ENCODE measurements at regions of chr19 and their contacts with region 1.

Region 1: DNA sequence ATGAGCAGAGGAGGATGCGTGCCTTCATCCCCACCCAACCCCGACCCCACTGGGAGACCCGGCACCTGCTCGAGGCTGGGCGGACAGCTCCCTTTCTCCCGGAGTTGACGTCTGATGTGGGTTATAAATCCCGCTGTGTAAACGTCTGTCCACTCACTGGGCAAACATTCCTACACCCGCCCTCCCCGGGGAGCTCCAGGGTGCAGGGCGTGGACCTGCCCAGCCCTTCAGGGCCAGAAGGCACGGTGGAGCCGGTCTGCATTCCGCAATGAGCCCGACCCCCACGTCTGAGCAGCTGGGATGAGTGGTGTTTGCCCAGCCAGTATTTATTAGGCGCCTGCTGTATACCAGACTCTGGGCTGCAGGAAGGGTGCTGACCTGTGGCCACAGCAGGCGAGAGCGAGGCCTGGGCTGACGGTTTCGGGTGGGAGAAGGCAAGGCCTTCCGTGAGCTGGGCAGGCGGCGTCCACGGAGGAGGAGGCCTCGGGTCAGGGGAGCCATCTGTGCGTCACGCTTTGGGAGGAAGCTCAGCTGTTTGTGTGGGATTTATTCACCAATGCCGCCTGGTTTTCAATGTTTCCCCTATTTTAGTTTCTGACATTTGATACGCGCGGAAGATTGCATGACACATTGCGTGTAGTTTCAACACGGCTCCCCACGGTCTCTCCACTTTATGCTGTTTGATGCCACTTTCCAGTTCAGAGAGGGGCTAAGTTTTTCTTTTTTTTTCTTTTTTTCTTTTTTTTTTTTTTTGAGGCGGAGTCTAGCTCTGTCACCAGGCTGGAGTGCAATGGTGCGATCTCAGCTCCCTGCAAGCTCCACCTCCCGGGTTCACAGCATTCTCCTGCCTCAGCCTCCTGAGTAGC is 2.0 kb downstream of the MISP start:
- DNase-seq: peak; percentile 95 to 99
- ATAC-seq: peak; percentile 81 to 85
- H3K4me3 ChIP-seq: peak overlapping the region; percentile 89
- H3K27ac ChIP-seq: peak overlapping the region; percentile 99 to 100
- H3K4me1 ChIP-seq: peaks cover 33% of the 10 kb centered on the region
- CTCF ChIP-seq: no peak
- EP300 ChIP-seq: peak; percentile 94 to 97; a peak in 4 of 5 replicates
- POLR2A ChIP-seq: peak; percentile 27; the same call in 1 of the 2 replicates
- RAD21 ChIP-seq: no peak

Region 2: DNA sequence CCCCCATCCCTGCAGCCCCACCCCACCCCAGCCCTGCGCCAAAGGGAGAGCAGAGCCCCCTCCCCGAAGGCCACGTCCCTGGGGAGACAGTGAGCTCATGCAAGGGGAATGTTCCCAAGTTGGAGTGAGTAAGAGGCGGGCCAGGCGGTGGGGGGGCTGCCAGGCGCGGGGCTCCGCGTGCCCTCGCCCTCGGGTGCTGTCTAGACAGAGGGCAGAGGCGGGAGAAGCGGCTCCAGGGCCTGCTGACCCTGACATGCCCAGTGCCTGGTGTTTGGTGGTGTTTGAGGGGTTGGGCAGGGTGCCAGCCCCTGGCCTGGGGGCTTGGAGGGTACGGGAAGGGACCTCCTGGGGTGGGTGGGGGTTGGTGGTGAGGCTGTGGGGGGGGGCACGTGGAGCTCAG is 75.7 kb before region 1 on chr19:
- CTCF ChIA-PET with region 1: interaction called, 3 read pairs
- POLR2A ChIA-PET with region 1: interaction called, 26 read pairs
- DNase-seq: peak; percentile 61 to 86
- ATAC-seq: peak; percentile 32 to 65
- H3K4me3 ChIP-seq: peak overlapping the region; percentile 64
- H3K27ac ChIP-seq: peak overlapping the region; percentile 99
- H3K4me1 ChIP-seq: peaks cover 26% of the 10 kb centered on the region
- CTCF ChIP-seq: no peak
- EP300 ChIP-seq: peak in 1 of 2 experiments; percentile 71; a peak in 1 of 5 replicates
- POLR2A ChIP-seq: no peak; the same call in 1 of the 2 replicates
- RAD21 ChIP-seq: no peak

Region 3: DNA sequence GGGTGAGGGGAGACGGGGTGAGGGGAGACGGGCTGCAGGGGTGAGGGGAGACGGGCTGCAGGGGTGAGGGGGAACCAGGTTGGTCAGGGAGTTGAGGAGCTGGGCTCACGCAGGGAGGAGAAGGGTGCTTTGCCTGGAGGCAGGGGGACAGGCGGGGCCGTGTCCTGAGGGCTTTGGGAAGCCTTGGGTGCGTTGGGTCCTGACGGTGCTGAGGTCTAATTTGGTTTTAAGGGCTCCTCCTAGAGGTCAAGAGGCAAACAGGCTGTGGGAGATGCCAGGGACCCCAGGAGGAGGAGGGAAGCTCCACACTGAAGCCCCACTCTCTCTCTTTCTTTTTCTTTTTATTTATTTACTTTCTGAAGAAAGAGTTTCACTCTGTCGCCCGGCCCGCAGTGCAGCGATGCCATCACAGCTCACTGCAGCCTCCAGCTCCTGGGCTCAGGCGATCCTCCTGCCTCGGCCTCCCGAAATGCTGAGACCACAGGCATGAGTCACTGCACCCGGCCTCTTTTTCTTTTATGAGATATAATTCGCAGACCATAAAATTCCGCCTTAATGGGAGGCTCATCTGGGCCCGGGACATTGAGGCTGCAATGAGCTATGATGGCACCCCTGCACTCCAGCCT is 11.3 kb before region 1 on chr19:
- CTCF ChIA-PET with region 1: interaction called, 23 read pairs
- POLR2A ChIA-PET with region 1: interaction called, 9 read pairs
- DNase-seq: peak; percentile 56 to 66
- ATAC-seq: peak; percentile 66 to 75; a peak in 4 of 6 replicates
- H3K4me3 ChIP-seq: no peak overlapping the region
- H3K27ac ChIP-seq: no peak overlapping the region; a peak in 1 of 6 replicates
- H3K4me1 ChIP-seq: no peaks in the 10 kb centered on the region
- CTCF ChIP-seq: 0 out of 3 replicates have a peak, but pooled peaks have one; percentile 19
- EP300 ChIP-seq: no peak
- POLR2A ChIP-seq: no peak
- RAD21 ChIP-seq: no peak

Region 4: DNA sequence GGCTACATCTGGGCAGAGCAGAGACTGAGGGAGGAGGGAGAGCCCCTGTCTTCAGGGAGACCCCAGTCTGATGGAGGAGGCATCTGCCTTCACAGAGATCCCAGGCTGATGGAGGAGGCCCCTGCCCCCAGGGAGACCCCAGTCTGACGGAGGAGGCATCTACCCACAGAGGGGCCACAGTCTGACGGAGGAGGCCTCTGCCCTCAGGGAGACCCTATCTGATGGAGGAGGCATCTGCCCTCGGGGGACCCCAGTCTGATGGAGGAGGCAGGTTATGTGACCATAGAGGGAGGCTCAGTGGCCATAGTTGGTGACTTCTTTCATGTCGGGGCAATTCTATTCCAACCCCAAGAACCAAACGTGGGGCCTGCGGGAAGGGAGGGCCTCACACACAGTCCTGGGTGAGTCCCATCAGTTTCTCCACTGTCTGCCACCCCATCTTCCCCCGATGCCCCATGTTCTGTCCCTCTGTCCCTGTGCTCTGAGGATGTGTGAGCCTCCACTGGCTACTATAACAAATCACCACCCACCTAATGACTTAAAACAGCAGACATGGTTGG is 12.4 kb after region 1 on chr19:
- CTCF ChIA-PET with region 1: interaction called, 18 read pairs
- POLR2A ChIA-PET with region 1: interaction called, 15 read pairs
- DNase-seq: peak in 1 of 2 experiments; percentile 42
- ATAC-seq: peak; percentile 14 to 20; a peak in 4 of 6 replicates
- H3K4me3 ChIP-seq: no peak overlapping the region
- H3K27ac ChIP-seq: peak overlapping the region in 1 of 2 experiments; percentile 89; a peak in 3 of 6 replicates
- H3K4me1 ChIP-seq: peaks cover 11% of the 10 kb centered on the region; the same call in 2 of the 3 replicates
- CTCF ChIP-seq: no peak
- EP300 ChIP-seq: no peak
- POLR2A ChIP-seq: no peak
- RAD21 ChIP-seq: no peak

Region 5: GRCh38 chr19:771332-771785 is 18.5 kb after region 1 on chr19:
- CTCF ChIA-PET with region 1: interaction called, 18 read pairs
- POLR2A ChIA-PET with region 1: interaction called, 15 read pairs
- DNase-seq: peak in 1 of 2 experiments; percentile 81
- ATAC-seq: peak; percentile 48 to 63; a peak in 3 of 6 replicates
- H3K4me3 ChIP-seq: no peak overlapping the region
- H3K27ac ChIP-seq: peak overlapping the region in 1 of 2 experiments; percentile 89; a peak in 3 of 6 replicates
- H3K4me1 ChIP-seq: peaks cover 18% of the 10 kb centered on the region
- CTCF ChIP-seq: peak; percentile 44
- EP300 ChIP-seq: no peak
- POLR2A ChIP-seq: no peak
- RAD21 ChIP-seq: peak; percentile 37 to 44; a peak in 4 of 5 replicates

Region 6: DNA sequence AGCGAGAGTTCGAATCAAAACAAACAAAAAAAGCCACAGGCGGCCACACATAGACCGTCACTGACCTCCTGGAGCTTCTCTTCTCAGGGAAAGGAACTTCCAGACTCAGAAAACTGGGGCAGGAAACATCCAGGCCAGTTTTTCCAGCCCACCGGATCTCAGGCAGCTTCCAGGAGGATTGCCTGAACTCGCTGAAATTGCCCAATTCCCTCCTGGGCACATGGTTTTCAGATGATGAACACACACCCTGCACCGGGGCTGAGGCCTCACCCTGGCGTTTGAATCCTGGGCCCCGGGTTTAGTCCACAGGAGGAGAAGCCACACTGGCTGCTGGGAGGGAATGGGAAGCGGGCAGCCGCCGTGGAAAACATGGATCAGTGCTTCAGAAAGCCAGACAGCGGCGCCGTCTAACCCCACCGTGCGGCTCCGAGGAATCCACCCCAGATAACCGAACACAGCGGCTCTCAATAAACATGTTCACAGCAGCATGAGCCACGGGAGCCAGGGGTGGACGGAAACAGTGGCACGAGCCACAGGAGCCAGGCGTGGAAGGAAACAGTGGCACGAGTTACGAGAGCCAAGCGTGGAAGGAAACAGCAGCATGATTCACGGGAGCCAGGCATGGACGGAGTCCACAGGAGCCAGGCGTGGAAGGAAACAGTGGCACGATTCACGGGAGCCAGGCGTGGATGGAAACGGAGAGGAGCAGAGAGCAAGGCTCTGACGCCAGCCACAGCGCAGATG is 26.2 kb after region 1 on chr19:
- CTCF ChIA-PET with region 1: no interaction called
- POLR2A ChIA-PET with region 1: interaction called, 16 read pairs
- DNase-seq: peak; percentile 52 to 92
- ATAC-seq: peak; percentile 41 to 72
- H3K4me3 ChIP-seq: no peak overlapping the region
- H3K27ac ChIP-seq: peak overlapping the region; percentile 88 to 100
- H3K4me1 ChIP-seq: peaks cover 30% of the 10 kb centered on the region
- CTCF ChIP-seq: no peak
- EP300 ChIP-seq: peak; percentile 20 to 42; a peak in 2 of 5 replicates
- POLR2A ChIP-seq: no peak
- RAD21 ChIP-seq: 0 out of 5 replicates have a peak, but pooled peaks of 1 of the 2 experiments have one; percentile 23

Region 7: DNA sequence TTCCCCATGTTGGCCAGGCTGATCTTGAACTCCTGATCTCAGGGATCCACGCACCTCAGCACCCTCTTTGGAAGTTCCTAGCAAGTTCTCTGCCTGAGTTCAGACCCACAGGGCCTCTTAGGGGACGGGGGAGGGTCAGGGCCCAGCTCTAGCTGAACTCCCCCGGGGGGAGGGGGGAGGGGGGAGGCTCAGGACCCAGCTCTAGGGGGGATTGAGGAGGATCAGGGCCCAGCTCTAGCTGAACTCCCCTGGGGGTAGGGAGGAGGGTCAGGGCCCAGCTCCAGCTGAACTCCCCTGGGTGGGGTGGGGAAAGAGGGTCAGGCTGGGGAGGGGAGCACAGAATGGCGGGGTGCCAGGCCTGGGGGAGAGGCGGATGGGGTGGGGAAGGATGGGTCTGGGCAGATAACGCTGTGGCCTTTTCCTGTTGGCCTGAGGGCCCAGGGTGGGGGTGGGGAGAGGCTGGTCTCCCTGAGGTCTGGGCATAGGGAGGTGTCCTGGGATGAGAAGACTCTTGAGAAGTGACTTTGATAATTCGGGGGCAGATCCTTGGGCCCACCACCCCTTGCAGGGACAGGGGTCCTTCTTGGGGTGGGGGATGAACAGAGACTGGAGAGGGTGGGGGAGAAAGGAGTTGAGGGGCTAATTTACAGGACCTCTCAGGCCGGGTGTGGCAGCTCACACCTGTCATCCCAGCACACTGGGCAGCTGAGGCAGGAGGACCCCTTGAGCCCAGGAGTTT is 38.9 kb after region 1 on chr19:
- CTCF ChIA-PET with region 1: no interaction called
- POLR2A ChIA-PET with region 1: no interaction called
- DNase-seq: peak in 1 of 2 experiments; percentile 52
- ATAC-seq: peak; percentile 44 to 45; a peak in 5 of 6 replicates
- H3K4me3 ChIP-seq: no peak overlapping the region
- H3K27ac ChIP-seq: peak overlapping the region; percentile 63 to 93
- H3K4me1 ChIP-seq: peaks cover 36% of the 10 kb centered on the region
- CTCF ChIP-seq: no peak
- EP300 ChIP-seq: 0 out of 5 replicates have a peak, but pooled peaks of 1 of the 2 experiments have one; percentile 9
- POLR2A ChIP-seq: no peak; the same call in 1 of the 2 replicates
- RAD21 ChIP-seq: no peak; a peak in 1 of 5 replicates

Measured in A549 (cell line).